Testis (tissue), 5 donors: ENCODE measurements at regions of chr21 and their contacts with region 1.

Region 1: GRCh38 chr21:41777951-41778874 is 11.4 kb upstream of the RIPK4 start:
- DNase-seq: peak; percentile 90
- H3K4me3 ChIP-seq: peak overlapping the region in 1 of 2 donors; percentile 15
- H3K27ac ChIP-seq: no peak overlapping the region
- H3K4me1 ChIP-seq: no peaks in the 10 kb centered on the region
- H3K27me3 ChIP-seq: no peaks in the 10 kb centered on the region
- CTCF ChIP-seq: peak; percentile 67 to 87 (median 82)
- POLR2A ChIP-seq: no peak

Region 2: GRCh38 chr21:41283211-41283818 is 494.9 kb before region 1 on chr21:
- intact Hi-C with region 1: loop called (anchors 10 kb)
- DNase-seq: peak; percentile 68
- H3K4me3 ChIP-seq: no peak overlapping the region
- H3K27ac ChIP-seq: no peak overlapping the region
- H3K4me1 ChIP-seq: peaks cover 3% of the 10 kb centered on the region
- H3K27me3 ChIP-seq: no peaks in the 10 kb centered on the region
- CTCF ChIP-seq: peak; percentile 30 to 72 (median 56)
- POLR2A ChIP-seq: no peak

Region 3: GRCh38 chr21:41612674-41613532 is 165.3 kb before region 1 on chr21:
- intact Hi-C with region 1: loop called (anchors 5 kb)
- DNase-seq: peak; percentile 77
- H3K4me3 ChIP-seq: no peak overlapping the region
- H3K27ac ChIP-seq: no peak overlapping the region
- H3K4me1 ChIP-seq: peaks cover 12% of the 10 kb centered on the region
- H3K27me3 ChIP-seq: no peaks in the 10 kb centered on the region
- CTCF ChIP-seq: peak; percentile 44 to 78 (median 74)
- POLR2A ChIP-seq: no peak

Region 4: GRCh38 chr21:41706678-41707077 is 71.5 kb before region 1 on chr21:
- intact Hi-C with region 1: no loop called
- DNase-seq: no peak
- H3K4me3 ChIP-seq: no peak overlapping the region
- H3K27ac ChIP-seq: no peak overlapping the region
- H3K4me1 ChIP-seq: no peaks in the 10 kb centered on the region
- H3K27me3 ChIP-seq: no peaks in the 10 kb centered on the region
- CTCF ChIP-seq: no peak
- POLR2A ChIP-seq: no peak